ENCODE measurements at regions of chr16 and their contacts with region 1.

Region 1: GRCh38 chr16:48623304-48624016 is 13.5 kb upstream of the N4BP1 start:
- DNase-seq: peak; percentile 84
- ATAC-seq: peak; percentile 96
- H3K4me3 Mint-ChIP-seq: peak overlapping the region; percentile 77
- H3K27ac Mint-ChIP-seq: peak overlapping the region; percentile 73
- H3K4me1 Mint-ChIP-seq: peaks cover 48% of the 10 kb centered on the region
- H3K27me3 Mint-ChIP-seq: no peaks in the 10 kb centered on the region

Region 2: GRCh38 chr16:48206594-48207242 is 416.7 kb before region 1 on chr16:
- CTCF ChIA-PET with region 1: no interaction called
- POLR2A ChIA-PET with region 1: no interaction called
- DNase-seq: no peak
- ATAC-seq: no peak
- H3K4me3 Mint-ChIP-seq: no peak overlapping the region
- H3K27ac Mint-ChIP-seq: no peak overlapping the region
- H3K4me1 Mint-ChIP-seq: no peaks in the 10 kb centered on the region
- H3K27me3 Mint-ChIP-seq: no peaks in the 10 kb centered on the region

Region 3: GRCh38 chr16:48231727-48232492 is 391.6 kb before region 1 on chr16:
- CTCF ChIA-PET with region 1: interaction called, 47 read pairs
- POLR2A ChIA-PET with region 1: no interaction called
- DNase-seq: peak; percentile 67
- ATAC-seq: peak; percentile 88
- H3K4me3 Mint-ChIP-seq: no peak overlapping the region
- H3K27ac Mint-ChIP-seq: peak overlapping the region; percentile 70
- H3K4me1 Mint-ChIP-seq: peaks cover 20% of the 10 kb centered on the region
- H3K27me3 Mint-ChIP-seq: no peaks in the 10 kb centered on the region

Region 4: DNA sequence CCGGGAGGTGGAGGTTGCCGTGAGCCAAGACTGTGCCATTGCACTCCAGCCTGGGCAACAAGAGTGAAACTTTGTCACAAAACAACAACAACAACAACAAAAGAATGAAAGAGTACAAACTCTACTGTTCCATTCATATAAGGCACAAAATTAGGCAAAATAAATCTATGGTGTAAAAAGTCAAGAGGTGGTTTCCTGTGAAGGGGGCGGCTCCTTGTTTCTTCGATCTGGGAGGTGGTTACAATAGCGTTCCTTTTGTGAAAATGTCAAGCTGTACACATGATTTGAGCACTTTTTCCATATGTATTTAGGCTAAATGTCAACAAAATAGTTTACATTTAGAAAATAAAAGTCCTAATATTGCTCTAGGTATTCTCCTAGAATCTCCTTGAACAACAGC is 245.2 kb before region 1 on chr16:
- CTCF ChIA-PET with region 1: interaction called, 17 read pairs
- POLR2A ChIA-PET with region 1: no interaction called
- DNase-seq: no peak
- ATAC-seq: no peak
- H3K4me3 Mint-ChIP-seq: no peak overlapping the region
- H3K27ac Mint-ChIP-seq: no peak overlapping the region
- H3K4me1 Mint-ChIP-seq: peaks cover 43% of the 10 kb centered on the region
- H3K27me3 Mint-ChIP-seq: no peaks in the 10 kb centered on the region

Region 5: DNA sequence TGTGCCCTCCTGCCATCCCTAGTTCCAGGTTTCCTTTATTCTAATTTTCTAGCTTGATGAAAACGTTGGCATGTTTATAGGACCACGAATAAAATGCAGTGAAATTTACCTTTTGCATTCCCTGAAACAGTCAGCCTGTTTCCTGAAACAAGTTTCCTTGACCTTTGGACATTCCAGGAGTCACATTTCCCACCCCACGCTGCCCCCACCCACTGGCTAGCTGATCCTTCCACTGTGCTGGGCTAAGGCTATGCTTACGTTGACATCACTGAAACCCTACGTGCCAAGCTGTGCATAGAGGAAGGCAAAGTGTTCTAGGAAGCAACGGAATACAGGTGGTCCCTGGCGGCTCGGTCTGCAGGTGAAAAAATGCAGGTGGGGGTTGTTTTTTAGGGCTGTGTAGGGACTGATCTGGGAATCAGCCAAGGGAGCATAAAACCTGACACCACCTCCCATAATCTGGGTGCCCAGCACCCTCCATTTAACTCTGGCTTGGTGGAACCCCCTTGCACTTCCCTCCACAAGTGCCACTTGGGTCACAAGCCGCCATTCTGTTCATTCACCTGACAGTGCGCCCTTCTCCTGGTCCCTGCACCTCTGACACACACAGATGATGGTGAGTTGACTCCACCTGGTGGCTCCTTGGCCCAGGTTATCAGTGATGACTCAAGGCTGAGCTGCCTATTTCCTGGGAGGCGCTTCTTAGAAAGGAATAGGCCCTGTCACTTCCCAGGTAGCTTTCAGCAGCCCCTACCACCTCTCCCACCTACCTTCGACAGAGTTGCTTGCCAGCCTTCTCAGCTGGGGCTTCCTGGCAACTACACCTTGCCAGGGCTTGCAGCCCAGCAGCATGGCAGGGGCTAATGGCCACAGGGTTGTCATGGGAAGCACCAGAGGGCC is 97.2 kb before region 1 on chr16:
- CTCF ChIA-PET with region 1: interaction called, 24 read pairs
- POLR2A ChIA-PET with region 1: no interaction called
- DNase-seq: peak; percentile 46
- ATAC-seq: peak; percentile 61
- H3K4me3 Mint-ChIP-seq: no peak overlapping the region
- H3K27ac Mint-ChIP-seq: no peak overlapping the region
- H3K4me1 Mint-ChIP-seq: no peaks in the 10 kb centered on the region
- H3K27me3 Mint-ChIP-seq: no peaks in the 10 kb centered on the region

Region 6: DNA sequence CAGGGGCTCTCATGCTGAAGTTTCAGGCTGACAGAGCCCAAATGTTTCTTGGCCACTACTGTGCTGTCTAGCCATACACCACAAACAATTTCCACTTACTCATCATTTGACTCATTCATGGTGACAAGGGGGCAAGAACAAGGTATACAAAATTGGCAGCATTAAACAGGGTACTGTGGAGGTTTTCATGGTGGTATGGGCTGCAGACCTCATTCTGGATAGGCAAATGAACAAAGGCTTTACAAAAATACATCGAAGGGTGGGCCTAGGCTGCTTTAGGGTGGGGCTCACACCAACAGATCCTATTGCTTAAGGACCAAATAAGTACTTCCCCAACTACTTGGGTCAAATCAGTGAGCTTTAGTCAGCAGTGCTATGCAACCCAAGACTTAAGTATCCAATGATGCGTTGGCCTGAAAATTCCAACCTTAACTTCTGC is 66.5 kb before region 1 on chr16:
- CTCF ChIA-PET with region 1: interaction called, 52 read pairs
- POLR2A ChIA-PET with region 1: no interaction called
- DNase-seq: peak; percentile 34
- ATAC-seq: peak; percentile 77
- H3K4me3 Mint-ChIP-seq: no peak overlapping the region
- H3K27ac Mint-ChIP-seq: peak overlapping the region; percentile 32
- H3K4me1 Mint-ChIP-seq: peaks cover 75% of the 10 kb centered on the region
- H3K27me3 Mint-ChIP-seq: no peaks in the 10 kb centered on the region

Region 7: GRCh38 chr16:48603647-48604376 is 19.6 kb before region 1 on chr16:
- CTCF ChIA-PET with region 1: interaction called, 28 read pairs
- POLR2A ChIA-PET with region 1: interaction called, 8 read pairs
- DNase-seq: no peak
- ATAC-seq: no peak
- H3K4me3 Mint-ChIP-seq: no peak overlapping the region
- H3K27ac Mint-ChIP-seq: peak overlapping the region; percentile 15
- H3K4me1 Mint-ChIP-seq: peaks cover 40% of the 10 kb centered on the region
- H3K27me3 Mint-ChIP-seq: no peaks in the 10 kb centered on the region

Region 8: GRCh38 chr16:48659940-48660339 is 36.5 kb after region 1 on chr16:
- CTCF ChIA-PET with region 1: no interaction called
- POLR2A ChIA-PET with region 1: no interaction called
- DNase-seq: no peak
- ATAC-seq: no peak
- H3K4me3 Mint-ChIP-seq: no peak overlapping the region
- H3K27ac Mint-ChIP-seq: no peak overlapping the region
- H3K4me1 Mint-ChIP-seq: no peaks in the 10 kb centered on the region
- H3K27me3 Mint-ChIP-seq: no peaks in the 10 kb centered on the region

Region 9: GRCh38 chr16:48704710-48705109 is 81.2 kb after region 1 on chr16:
- CTCF ChIA-PET with region 1: no interaction called
- POLR2A ChIA-PET with region 1: no interaction called
- DNase-seq: no peak
- ATAC-seq: no peak
- H3K4me3 Mint-ChIP-seq: no peak overlapping the region
- H3K27ac Mint-ChIP-seq: no peak overlapping the region
- H3K4me1 Mint-ChIP-seq: no peaks in the 10 kb centered on the region
- H3K27me3 Mint-ChIP-seq: no peaks in the 10 kb centered on the region

Measured in activated CD8-positive, alpha-beta T cell treated with anti-CD3 and anti-CD28 coated beads, Interleukin-2, amount 10 ng/mL, durations not matched to agents 7 days and 5 days (primary cell).